ENCODE measurements at regions of chr1 and their contacts with region 1.

Region 1: GRCh38 chr1:20786253-20787028 is 666 bp downstream of the HP1BP3 start:
- DNase-seq: peak; percentile 96
- H3K4me3 Mint-ChIP-seq: peak overlapping the region; percentile 98
- H3K27ac Mint-ChIP-seq: peak overlapping the region; percentile 98
- H3K4me1 Mint-ChIP-seq: peaks cover 25% of the 10 kb centered on the region
- H3K27me3 Mint-ChIP-seq: no peaks in the 10 kb centered on the region

Region 2: GRCh38 chr1:20732588-20733360 is 53.7 kb before region 1 on chr1 and contains the start of gene SH2D5:
- intact Hi-C with region 1: loop called (anchors 2 kb)
- DNase-seq: peak; percentile 60
- H3K4me3 Mint-ChIP-seq: peak within 1 kb of the TSS; percentile 84
- H3K27ac Mint-ChIP-seq: no peak within 1 kb of the TSS
- H3K4me1 Mint-ChIP-seq: peaks cover 11% of the 10 kb centered on the region
- H3K27me3 Mint-ChIP-seq: peaks cover 37% of the 10 kb centered on the region
- total RNA-seq, gene SH2D5: 0.05 and 0.16 TPM in 2 replicates

Region 3: DNA sequence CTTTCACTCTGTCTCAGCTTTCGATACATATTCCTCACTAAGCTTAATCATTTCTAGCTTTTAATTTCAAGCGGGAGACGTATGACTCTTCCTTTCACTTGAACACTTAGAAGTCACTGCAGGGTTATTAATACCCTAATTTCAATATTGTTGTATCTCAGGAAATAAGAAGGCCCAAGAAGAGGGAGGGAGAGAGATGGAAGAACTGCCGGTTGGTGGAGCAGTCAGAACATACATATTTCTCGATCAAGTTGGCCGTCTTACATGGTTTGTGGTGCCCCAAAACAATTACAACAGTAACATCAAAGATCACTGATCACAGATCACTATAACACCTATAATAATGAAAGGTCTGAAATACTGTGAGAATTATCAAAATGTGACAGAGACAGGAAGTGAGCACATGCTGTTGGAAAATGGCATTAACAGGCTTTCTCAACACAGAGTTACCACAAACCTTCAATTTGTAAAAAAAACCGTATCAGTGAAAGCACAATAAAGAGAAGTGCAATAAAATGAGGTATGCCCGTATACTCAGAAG is 146.1 kb after region 1 on chr1:
- intact Hi-C with region 1: loop called (anchors 5 kb)
- DNase-seq: no peak
- H3K4me3 Mint-ChIP-seq: peak overlapping the region; percentile 56
- H3K27ac Mint-ChIP-seq: peak overlapping the region; percentile 84
- H3K4me1 Mint-ChIP-seq: peaks cover 35% of the 10 kb centered on the region
- H3K27me3 Mint-ChIP-seq: no peaks in the 10 kb centered on the region

Region 4: DNA sequence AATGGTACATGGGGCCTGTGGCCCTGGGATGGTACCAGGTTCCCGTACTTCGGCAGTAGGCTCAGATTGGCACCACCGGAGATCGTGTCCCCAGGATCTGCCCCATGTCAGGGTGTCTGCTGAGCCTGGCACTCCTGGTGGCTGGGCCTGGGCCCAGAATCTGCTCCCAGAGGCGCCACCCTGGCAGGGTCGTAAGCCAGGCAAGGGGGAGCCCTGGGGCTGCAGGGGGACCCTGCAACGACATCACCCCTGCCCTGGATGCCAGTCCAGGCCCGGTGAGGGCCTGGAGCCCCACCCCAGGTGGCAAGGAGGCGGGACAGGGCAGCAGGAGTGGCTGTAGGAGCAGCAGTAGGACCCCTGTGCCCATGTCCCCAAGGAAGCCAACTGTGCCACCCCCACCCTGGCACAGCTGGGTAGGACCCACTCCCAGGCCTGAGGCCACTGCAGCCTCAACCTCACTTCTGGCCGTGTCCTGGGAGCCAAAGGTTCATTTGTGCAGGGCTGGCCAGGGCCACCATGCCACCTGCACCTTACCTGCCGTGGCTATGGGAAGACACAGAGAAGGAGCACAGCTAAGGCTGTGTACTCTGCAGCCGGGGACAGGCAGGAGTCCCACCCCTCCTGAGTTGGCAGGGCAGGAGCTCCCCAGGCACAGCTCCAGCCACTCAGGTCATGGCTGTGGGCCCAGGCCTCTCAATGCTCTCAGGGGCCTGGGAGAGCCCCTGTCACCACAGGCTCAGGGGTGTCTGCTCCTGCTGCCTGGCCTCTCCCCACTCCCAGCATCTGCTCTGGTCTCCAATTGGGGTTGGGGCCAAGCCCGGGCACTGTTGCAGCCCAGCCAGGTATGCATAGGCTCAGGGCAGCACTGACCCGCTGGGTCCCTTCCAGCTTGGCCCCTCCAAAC is 248.5 kb after region 1 on chr1:
- intact Hi-C with region 1: no loop called
- DNase-seq: no peak
- H3K4me3 Mint-ChIP-seq: no peak overlapping the region
- H3K27ac Mint-ChIP-seq: no peak overlapping the region
- H3K4me1 Mint-ChIP-seq: peaks cover 4% of the 10 kb centered on the region
- H3K27me3 Mint-ChIP-seq: no peaks in the 10 kb centered on the region

Region 5: DNA sequence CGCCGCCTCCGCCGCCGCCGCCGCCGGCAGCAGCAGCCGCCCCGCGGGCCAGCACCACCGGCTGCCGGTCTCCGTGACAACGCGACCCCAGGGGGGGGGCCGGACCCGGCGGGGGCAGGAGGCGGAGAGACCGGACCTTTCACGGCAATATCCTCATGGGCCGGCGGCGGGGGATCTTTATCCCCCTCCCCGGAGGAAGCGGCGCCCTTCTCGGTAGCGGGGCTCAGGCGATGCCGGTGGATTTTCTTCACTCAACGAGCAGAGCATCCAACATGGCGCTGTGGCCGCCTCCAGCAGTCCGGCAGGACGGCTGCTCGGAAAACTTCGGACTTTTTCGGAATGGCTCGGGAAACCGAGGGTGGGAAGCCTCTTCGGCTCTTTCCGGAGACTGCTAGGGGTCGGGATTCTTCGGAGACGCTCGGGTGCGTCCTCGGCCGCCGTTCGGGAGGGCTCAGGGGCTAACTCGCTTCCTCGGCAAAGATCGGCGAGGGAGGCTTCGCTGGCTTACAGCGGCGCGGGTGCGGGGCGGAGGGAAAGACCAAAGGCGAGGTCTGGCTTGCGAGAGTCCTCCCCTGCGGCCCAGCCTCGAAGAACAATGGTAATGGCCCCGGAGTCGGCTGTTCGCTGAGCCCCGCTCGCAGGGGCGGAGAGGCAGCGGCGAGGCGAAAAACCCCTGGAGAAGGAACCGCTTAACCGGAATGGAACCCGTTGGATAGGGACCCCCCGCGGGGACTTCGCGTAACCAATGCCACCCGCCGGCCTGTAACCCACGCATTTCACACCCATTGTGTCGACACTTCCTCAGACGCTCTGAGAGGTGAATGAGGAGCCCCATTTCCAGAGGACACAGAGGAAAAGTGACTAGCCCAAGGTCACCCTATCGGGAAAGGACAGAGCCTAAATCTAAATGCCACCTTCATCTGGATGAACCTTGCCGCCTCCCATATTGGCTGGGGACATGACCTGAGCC is 390.4 kb after region 1 on chr1 and contains the start of gene EIF4G3:
- intact Hi-C with region 1: loop called (anchors 1 kb)
- DNase-seq: peak; percentile 99
- H3K4me3 Mint-ChIP-seq: peak within 1 kb of the TSS; percentile 86
- H3K27ac Mint-ChIP-seq: peak within 1 kb of the TSS; percentile 86
- H3K4me1 Mint-ChIP-seq: peaks cover 18% of the 10 kb centered on the region
- H3K27me3 Mint-ChIP-seq: peaks cover 4% of the 10 kb centered on the region
- total RNA-seq, gene EIF4G3: 64.2 and 66.0 TPM in 2 replicates

Region 6: DNA sequence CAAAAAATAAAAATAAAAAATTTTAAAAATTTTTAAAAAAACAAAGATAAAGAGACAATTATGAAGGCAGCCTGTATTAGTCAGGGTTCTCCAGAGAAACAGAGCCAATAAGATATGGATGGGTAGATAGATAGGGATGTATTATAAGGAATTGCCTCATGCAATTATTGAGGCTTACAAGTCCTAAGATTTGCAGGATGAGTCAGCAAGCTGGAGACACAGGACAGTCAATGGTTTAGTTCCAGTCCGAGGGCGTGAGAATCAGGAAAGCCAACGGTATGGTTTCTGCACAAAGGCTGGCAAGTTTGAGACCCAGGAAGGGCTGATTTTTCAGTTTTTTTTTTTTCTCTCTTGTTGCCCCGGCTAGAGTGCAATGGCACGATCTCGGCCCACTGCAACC is 414.3 kb after region 1 on chr1:
- intact Hi-C with region 1: loop called (anchors 5 kb)
- DNase-seq: no peak
- H3K4me3 Mint-ChIP-seq: no peak overlapping the region
- H3K27ac Mint-ChIP-seq: no peak overlapping the region
- H3K4me1 Mint-ChIP-seq: no peaks in the 10 kb centered on the region
- H3K27me3 Mint-ChIP-seq: peaks cover 5% of the 10 kb centered on the region